Activated CD4-positive, alpha-beta T cell treated with anti-CD3 and anti-CD28 coated beads, Interleukin-2, amount 10 ng/mL, durations not matched to agents 7 days and 5 days (primary cell): ENCODE measurements at regions of chr9 and their contacts with region 1.

Region 1: GRCh38 chr9:99680191-99680590 is 141.5 kb upstream of the NR4A3 start:
- DNase-seq: no peak
- H3K4me3 Mint-ChIP-seq: no peak overlapping the region
- H3K27ac Mint-ChIP-seq: no peak overlapping the region
- H3K4me1 Mint-ChIP-seq: no peaks in the 10 kb centered on the region
- H3K27me3 Mint-ChIP-seq: peaks cover 4% of the 10 kb centered on the region

Region 2: GRCh38 chr9:100167915-100168654 is 487.9 kb after region 1 on chr9:
- CTCF ChIA-PET with region 1: no interaction called
- POLR2A ChIA-PET with region 1: interaction called, 11 read pairs
- DNase-seq: no peak
- H3K4me3 Mint-ChIP-seq: no peak overlapping the region
- H3K27ac Mint-ChIP-seq: no peak overlapping the region
- H3K4me1 Mint-ChIP-seq: no peaks in the 10 kb centered on the region
- H3K27me3 Mint-ChIP-seq: no peaks in the 10 kb centered on the region